ENCODE measurements at regions of chr17 and their contacts with region 1.

Region 1: GRCh38 chr17:35849469-35850348 is 19.0 kb downstream of the HEATR9 start:
- DNase-seq: peak; percentile 55
- H3K4me3 ChIP-seq: no peak overlapping the region
- H3K27ac ChIP-seq: no peak overlapping the region
- H3K4me1 ChIP-seq: no peaks in the 10 kb centered on the region
- H3K27me3 ChIP-seq: no peaks in the 10 kb centered on the region
- CTCF ChIP-seq: peak; percentile 90
- EP300 ChIP-seq: no peak
- RAD21 ChIP-seq: peak; percentile 63

Region 2: GRCh38 chr17:35825206-35825605 is 24.5 kb before region 1 on chr17:
- CTCF ChIA-PET with region 1: interaction called, 33 read pairs
- POLR2A ChIA-PET with region 1: no interaction called
- DNase-seq: no peak
- H3K4me3 ChIP-seq: no peak overlapping the region
- H3K27ac ChIP-seq: no peak overlapping the region
- H3K4me1 ChIP-seq: no peaks in the 10 kb centered on the region
- H3K27me3 ChIP-seq: no peaks in the 10 kb centered on the region
- CTCF ChIP-seq: no peak
- EP300 ChIP-seq: no peak
- RAD21 ChIP-seq: no peak

Region 3: DNA sequence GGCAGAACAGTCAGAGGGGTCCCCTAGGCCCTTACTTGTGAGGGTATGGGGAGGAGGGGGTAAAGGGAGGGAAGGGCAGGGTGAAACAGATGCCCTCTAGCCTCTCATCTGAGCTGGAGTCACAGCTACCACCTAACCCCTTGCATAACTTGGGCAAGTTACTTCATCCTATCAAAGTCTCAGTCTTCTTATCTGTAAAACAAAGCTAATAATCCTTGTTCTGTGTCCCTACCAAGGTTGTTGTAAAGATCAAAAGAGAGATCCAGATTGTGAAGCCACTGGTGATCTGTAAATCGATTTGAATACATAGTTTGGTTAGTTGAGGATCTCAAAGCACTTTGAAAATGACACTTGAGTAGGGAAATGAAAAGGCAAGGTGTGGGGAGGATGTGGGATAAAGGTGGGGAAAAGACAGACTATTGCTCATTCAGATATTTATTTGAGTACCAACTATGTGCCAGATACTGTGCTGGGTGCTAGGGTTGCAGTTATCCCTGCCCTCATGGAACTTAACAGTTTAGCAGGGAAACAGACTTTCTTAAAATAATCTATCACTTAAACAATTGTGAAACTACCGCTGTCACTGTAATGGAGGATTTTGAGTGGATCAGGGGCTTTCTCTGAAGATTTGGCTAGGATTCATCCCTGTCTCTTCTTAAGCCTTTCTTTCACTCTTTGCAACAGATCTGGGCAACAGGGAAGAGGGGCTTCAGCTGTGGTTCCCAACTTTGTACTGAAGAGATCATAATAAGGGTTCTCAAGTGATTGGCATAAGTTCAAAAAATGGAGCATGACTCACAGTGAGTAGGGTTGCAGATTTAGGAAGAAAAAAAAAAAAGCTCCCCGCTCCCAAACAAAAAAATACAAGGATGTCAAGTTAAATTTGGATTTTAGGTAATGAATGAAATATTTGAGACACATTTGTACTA is 16.0 kb after region 1 on chr17:
- CTCF ChIA-PET with region 1: interaction called, 12 read pairs
- POLR2A ChIA-PET with region 1: no interaction called
- DNase-seq: no peak
- H3K4me3 ChIP-seq: no peak overlapping the region
- H3K27ac ChIP-seq: no peak overlapping the region
- H3K4me1 ChIP-seq: peaks cover 0 to 3% of the 10 kb centered on the region in 2 experiments; a peak in 1 of 4 replicates
- H3K27me3 ChIP-seq: no peaks in the 10 kb centered on the region
- CTCF ChIP-seq: no peak
- EP300 ChIP-seq: no peak
- RAD21 ChIP-seq: no peak

Region 4: GRCh38 chr17:36008998-36009665 is 159.4 kb after region 1 on chr17:
- CTCF ChIA-PET with region 1: no interaction called
- POLR2A ChIA-PET with region 1: no interaction called
- DNase-seq: peak; percentile 10
- H3K4me3 ChIP-seq: no peak overlapping the region
- H3K27ac ChIP-seq: no peak overlapping the region
- H3K4me1 ChIP-seq: no peaks in the 10 kb centered on the region
- H3K27me3 ChIP-seq: no peaks in the 10 kb centered on the region; the same call in 1 of the 2 replicates
- CTCF ChIP-seq: peak; percentile 57
- EP300 ChIP-seq: no peak
- RAD21 ChIP-seq: no peak

Measured in SK-N-SH (cell line).